Natural killer cell (primary cell): ENCODE measurements at regions of chr12 and their contacts with region 1.

Region 1: DNA sequence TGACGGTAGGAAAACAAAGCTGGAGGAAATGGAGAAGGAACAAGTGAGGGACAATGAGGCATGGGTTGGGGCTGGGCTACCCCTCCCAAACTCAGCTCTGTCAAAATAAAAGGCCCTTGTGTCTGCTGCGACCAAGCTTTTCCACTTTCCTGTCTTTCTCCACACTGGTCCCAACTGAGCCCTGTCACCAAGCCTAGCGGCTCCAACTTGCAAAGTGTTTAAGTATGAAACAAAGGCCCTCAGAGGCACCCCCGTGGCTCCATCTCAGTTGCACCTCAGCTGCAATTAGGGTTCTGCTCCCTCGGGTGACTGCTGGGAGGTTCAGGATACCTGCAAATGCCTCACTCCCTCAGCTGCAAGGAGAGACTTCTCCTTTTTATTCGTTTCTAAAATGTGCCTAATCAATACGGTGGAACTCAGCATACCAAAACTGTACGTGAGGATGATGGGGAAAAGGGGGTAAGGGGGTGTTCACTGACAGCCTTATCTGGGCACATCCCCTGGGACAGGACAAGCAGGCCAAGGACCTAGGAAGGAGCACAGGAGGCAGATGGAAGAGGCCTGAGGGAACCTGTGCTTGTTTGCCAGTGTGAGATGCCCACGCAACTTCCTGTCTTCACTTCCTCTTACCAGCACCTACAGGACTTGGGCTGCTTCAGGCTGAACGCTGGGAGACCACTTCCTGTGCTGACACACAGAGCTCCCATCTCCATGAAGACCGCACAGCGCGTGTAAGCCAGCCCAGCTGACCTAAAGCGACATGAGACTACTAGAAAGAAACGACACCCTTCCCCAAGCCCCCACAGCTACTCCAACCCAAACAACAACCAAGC is 8.9 kb downstream of the VAMP1 start:
- DNase-seq: peak; percentile 68 to 95
- ATAC-seq: peak; percentile 79 to 94 (median 92)
- H3K4me3 ChIP-seq: no peak overlapping the region
- H3K4me3 Mint-ChIP-seq: peak overlapping the region; percentile 75
- H3K27ac ChIP-seq: peak overlapping the region; percentile 88
- H3K27ac Mint-ChIP-seq: peak overlapping the region; percentile 95 to 97
- H3K4me1 ChIP-seq: peaks cover 57% of the 10 kb centered on the region
- H3K4me1 Mint-ChIP-seq: peaks cover 50 to 77% of the 10 kb centered on the region in 2 donors
- H3K27me3 ChIP-seq: no peaks in the 10 kb centered on the region
- H3K27me3 Mint-ChIP-seq: no peaks in the 10 kb centered on the region
- CTCF ChIP-seq: no peak

Region 2: DNA sequence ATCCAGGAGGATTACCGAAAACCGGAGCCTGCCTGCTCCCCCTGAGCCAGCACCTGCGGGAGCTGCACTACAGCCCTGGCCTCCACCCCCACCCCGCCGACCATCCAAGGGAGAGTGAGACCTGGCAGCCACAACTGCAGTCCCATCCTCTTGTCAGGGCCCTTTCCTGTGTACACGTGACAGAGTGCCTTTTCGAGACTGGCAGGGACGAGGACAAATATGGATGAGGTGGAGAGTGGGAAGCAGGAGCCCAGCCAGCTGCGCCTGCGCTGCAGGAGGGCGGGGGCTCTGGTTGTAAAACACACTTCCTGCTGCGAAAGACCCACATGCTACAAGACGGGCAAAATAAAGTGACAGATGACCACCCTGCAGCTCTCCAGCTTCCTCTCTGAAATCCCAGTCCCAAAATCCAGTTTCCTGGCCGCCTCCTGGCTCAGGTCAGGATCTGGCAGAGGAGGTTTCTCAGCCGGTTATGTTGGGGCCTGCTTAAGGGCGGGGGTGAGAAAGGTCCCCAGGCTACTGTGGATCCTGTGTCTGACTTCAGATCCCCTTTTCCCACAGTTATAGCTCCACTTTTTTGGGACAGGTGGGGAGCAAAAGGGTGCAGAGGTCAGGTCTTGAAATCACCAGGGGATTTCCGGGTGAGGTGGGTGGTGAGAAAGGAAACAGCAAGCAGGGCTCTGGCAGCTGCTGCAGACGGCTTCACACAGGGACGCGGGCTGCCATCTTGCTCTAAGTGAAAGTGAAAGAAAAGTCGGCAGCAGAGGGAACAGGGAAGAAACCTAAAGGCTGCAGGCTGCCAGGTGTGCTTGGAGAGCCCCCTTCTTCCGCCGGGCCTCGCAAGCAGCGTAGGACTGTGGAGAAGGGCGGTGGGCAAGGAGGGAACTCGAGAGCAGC is 10.0 kb before region 1 on chr12 and contains the start of gene TAPBPL:
- intact Hi-C with region 1: loop called (anchors 1 kb)
- DNase-seq: peak; percentile 73 to 95
- ATAC-seq: peak; percentile 88 to 95 (median 94)
- H3K4me3 ChIP-seq: peak within 1 kb of the TSS; percentile 89
- H3K4me3 Mint-ChIP-seq: peak within 1 kb of the TSS; percentile 100
- H3K27ac ChIP-seq: peak within 1 kb of the TSS; percentile 98
- H3K27ac Mint-ChIP-seq: peak within 1 kb of the TSS; percentile 100
- H3K4me1 ChIP-seq: peaks cover 52% of the 10 kb centered on the region
- H3K4me1 Mint-ChIP-seq: peaks cover 33 to 46% of the 10 kb centered on the region in 2 donors
- H3K27me3 ChIP-seq: no peaks in the 10 kb centered on the region
- H3K27me3 Mint-ChIP-seq: no peaks in the 10 kb centered on the region
- CTCF ChIP-seq: no peak
- total RNA-seq, gene TAPBPL: 43.0 to 51.4 (median 46.9) TPM

Region 3: DNA sequence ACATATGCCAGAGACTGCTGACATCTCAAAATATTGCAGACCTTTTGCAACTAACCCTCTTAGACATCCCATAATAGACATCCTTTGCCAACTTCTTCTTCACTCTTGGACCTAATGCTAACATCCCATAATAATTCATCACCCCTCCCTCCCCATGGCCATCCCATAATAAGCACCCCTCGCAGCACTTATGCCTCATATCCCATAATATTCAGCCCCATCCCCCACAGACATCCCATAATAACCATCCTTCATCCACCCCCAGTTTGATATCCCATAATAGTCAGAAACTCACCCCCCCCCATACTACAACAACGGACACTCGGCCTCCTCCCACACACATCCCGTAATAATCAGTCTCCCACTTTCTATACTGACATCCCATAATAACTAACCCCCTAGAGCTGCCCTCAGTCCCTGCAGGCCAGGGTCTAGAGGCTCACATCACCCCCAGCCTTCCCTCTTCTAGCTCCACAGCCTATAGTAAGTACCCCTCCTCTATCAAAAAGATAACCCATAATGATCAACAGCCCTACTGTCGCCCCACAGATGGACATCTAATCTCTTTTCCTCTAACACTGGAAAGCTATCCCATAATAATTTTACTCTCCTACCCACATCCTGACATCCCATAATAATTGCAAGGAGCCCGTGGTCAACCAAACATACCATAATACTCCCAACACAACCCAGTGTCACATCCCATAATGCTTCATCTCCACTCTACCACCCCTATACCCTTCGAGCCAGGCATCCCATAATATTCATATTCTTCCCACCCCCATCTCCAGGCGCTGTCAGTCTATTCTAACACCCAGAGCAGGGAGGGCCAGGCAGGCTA is 146.4 kb after region 1 on chr12:
- intact Hi-C with region 1: loop called (anchors 5 kb)
- DNase-seq: peak; percentile 49 to 87
- ATAC-seq: peak; percentile 43 to 69 (median 53)
- H3K4me3 ChIP-seq: no peak overlapping the region
- H3K4me3 Mint-ChIP-seq: no peak overlapping the region
- H3K27ac ChIP-seq: peak overlapping the region; percentile 97
- H3K27ac Mint-ChIP-seq: no peak overlapping the region
- H3K4me1 ChIP-seq: peaks cover 59% of the 10 kb centered on the region
- H3K4me1 Mint-ChIP-seq: peaks cover 40 to 53% of the 10 kb centered on the region in 2 donors
- H3K27me3 ChIP-seq: no peaks in the 10 kb centered on the region
- H3K27me3 Mint-ChIP-seq: no peaks in the 10 kb centered on the region
- CTCF ChIP-seq: no peak

Region 4: GRCh38 chr12:6887460-6887859 is 425.8 kb after region 1 on chr12:
- intact Hi-C with region 1: no loop called
- DNase-seq: no peak
- ATAC-seq: no peak
- H3K4me3 ChIP-seq: no peak overlapping the region
- H3K4me3 Mint-ChIP-seq: no peak overlapping the region
- H3K27ac ChIP-seq: no peak overlapping the region
- H3K27ac Mint-ChIP-seq: no peak overlapping the region
- H3K4me1 ChIP-seq: peaks cover 14% of the 10 kb centered on the region
- H3K4me1 Mint-ChIP-seq: peaks cover 11 to 15% of the 10 kb centered on the region in 2 donors
- H3K27me3 ChIP-seq: no peaks in the 10 kb centered on the region
- H3K27me3 Mint-ChIP-seq: no peaks in the 10 kb centered on the region
- CTCF ChIP-seq: no peak